Heart right ventricle (tissue), 16 donors: ENCODE measurements at regions of chr10 and their contacts with region 1.

Region 1: DNA sequence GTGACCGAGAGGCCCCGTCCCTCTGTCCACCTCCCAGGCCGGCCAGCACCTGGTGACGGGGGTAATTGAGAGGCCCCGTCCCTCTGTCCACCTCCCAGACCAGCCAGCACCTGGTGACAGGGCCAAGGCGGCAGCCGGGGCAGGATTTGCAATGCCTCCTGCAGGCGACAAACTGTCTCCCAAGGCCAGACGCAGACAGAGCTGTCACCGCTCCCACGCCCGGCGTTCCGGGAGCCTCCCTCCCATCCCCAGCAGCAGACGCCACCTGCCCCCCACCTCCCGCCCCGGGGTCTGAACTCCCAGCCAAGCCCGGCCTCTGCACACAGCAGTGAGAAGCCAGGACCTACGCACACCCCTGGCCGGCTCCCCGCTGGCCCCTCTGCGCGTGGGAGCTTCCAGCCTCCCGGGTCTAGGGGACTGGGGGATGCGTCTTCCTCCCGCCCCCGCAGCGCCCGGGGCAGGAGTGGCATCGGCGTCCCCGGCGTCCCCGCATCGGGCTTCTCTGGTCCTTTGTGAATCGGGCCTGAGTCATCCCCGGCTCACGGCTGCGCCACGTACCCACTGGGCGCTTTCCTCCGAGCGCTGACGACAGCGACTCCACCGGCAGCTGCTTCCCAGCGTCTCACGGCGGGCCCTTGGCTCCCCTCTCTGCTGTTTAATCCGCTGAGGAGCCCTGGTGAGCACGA is 95.1 kb upstream of the DIP2C start:
- DNase-seq: peak; percentile 33 to 46
- ATAC-seq: peak; percentile 46 to 89 (median 66)
- H3K4me3 ChIP-seq: peak overlapping the region in 9 of 10 donors; percentile 35 to 56 (median 48)
- H3K27ac ChIP-seq: peak overlapping the region in 1 of 10 donors; percentile 13
- H3K4me1 ChIP-seq: peaks cover 0 to 28% (median 17%) of the 10 kb centered on the region in 9 donors
- H3K27me3 ChIP-seq: peaks cover 0 to 33% (median 26%) of the 10 kb centered on the region in 7 donors
- CTCF ChIP-seq: peak in 3 of 9 donors; percentile 12 to 26 (median 23)

Region 2: DNA sequence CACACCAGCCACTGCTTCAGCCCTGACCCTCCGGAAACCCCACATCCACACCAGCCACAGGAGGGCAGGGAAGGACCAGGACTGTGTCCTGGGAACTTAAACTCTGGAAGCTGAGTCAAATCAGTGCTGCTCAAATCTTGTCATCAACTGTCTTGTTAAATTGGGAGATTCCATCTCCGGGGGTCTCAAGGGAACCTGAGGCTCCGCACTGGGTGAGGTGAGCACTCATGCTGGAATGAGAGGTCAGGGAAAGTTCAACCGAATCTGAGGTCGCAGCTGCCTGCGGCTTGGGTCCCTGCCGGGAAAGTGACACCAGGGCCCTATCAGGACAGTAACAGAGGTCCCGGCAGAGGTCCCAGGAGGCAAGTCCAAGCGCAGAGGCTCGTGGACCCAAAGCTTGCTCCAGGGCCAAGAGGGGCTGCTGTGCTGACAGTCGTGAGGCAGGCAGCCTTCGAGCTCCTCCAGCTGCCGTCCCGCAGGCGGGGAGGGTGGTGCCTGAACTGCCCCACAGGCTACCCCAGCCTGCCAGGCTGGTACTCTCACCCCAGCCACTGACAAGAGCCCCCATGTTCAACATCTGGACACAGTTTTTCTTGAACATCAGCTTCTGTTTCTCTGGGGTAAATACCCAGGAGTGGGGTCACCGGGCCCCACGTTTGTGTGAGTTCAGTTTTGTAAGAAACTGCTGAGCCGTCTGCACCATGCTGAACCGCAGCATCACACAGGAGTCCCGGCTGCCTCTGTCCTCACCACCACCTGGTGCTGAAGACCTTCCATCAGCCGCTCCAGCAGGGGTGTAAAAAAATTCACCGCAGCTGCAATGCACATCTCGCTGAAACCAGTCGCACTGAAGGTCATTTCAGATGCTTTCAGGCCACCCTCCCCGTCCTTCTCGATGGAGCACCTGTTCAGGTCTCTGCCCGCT is 196.0 kb before region 1 on chr10:
- intact Hi-C with region 1: loop called in 3 of 10 experiments (anchors 10 kb)
- DNase-seq: peak; percentile 56 to 67
- ATAC-seq: peak; percentile 73 to 84 (median 78)
- H3K4me3 ChIP-seq: no peak overlapping the region
- H3K27ac ChIP-seq: no peak overlapping the region
- H3K4me1 ChIP-seq: peaks cover 0 to 38% (median 21%) of the 10 kb centered on the region in 9 donors
- H3K27me3 ChIP-seq: no peaks in the 10 kb centered on the region
- CTCF ChIP-seq: peak in 5 of 9 donors; percentile 27 to 45 (median 40)

Region 3: DNA sequence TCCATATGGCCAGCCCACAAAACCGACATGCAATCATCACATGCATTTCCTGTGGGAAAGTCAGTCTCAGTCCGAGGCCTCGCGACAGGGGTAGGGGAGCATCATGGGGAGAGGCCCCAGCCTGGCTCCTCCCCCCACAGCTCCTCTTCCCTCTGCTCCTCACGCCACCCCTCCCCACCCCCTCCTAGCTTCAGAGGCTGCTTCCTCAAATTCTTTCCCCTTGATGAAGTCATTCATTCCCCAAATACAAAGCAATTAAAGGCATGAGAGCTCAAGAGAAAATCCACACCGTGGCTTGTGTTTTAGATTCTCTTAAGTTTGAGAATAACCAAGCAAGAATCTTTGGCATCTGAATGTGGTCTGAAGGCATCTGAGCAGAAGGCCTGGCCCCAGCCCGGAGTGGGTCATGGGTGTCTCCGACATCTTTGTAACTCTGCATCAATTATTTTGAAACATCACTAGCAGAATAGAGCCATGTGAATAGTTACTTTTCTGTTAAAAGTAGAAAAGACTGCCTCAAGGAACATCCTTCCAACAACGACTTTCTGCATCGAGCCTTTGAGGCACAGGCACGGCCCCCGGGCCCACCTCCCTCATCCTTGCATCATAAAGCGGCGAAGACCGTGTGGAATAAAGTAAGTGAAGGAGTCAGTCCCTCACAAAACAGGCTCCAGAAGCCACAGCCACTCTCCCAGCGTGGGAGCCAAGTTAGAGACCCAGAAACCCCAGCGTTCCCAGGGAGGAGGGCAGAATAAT is 186.0 kb before region 1 on chr10:
- intact Hi-C with region 1: loop called in 1 of 10 experiments (anchors 10 kb)
- DNase-seq: no peak
- ATAC-seq: no peak
- H3K4me3 ChIP-seq: no peak overlapping the region
- H3K27ac ChIP-seq: no peak overlapping the region
- H3K4me1 ChIP-seq: peaks cover 8 to 55% (median 25%) of the 10 kb centered on the region in 9 donors
- H3K27me3 ChIP-seq: no peaks in the 10 kb centered on the region
- CTCF ChIP-seq: no peak

Region 4: GRCh38 chr10:683448-684071 is 101.0 kb before region 1 on chr10:
- intact Hi-C with region 1: loop called in 1 of 10 experiments (anchors 5 kb)
- DNase-seq: no peak
- ATAC-seq: peak in 1 of 8 donors; percentile 23
- H3K4me3 ChIP-seq: no peak overlapping the region
- H3K27ac ChIP-seq: peak overlapping the region in 3 of 10 donors; percentile 12 to 44 (median 17)
- H3K4me1 ChIP-seq: peaks cover 5 to 65% (median 40%) of the 10 kb centered on the region in 9 donors
- H3K27me3 ChIP-seq: peaks cover 0 to under 1% (median 0%) of the 10 kb centered on the region in 7 donors
- CTCF ChIP-seq: no peak